ENCODE measurements at regions of chr22 and their contacts with region 1.

Region 1: GRCh38 chr22:29394931-29395581 is 6.7 kb upstream of the AP1B1 start:
- DNase-seq: peak; percentile 41 to 82 (median 64)
- ATAC-seq: peak; percentile 97
- H3K4me3 ChIP-seq: no peak overlapping the region
- H3K4me3 Mint-ChIP-seq: no peak overlapping the region
- H3K27ac ChIP-seq: no peak overlapping the region
- H3K27ac Mint-ChIP-seq: no peak overlapping the region
- H3K4me1 ChIP-seq: no peaks in the 10 kb centered on the region
- H3K4me1 Mint-ChIP-seq: peaks cover 6% of the 10 kb centered on the region
- H3K27me3 ChIP-seq: no peaks in the 10 kb centered on the region
- H3K27me3 Mint-ChIP-seq: peaks cover 2% of the 10 kb centered on the region
- CTCF ChIP-seq: peak; percentile 75

Region 2: DNA sequence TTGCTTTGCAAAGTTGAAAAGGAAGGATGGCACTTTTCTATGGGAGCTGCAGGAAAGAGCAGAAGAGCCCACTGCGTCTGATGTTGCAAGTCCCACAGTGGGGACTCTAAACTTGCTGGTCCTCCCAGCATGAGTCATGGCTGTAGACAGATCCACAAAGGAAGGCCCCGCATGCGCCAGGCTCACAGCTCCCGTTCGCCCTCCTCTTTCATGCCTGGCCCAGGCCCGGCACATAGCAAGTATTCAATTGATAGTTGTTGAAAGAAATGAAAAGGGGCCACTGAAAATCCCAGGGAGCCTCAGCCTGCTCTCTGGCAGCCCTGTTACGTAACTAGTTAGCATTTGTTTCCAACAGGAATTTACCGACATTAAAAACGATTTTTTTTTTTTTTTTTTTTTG is 25.6 kb before region 1 on chr22:
- CTCF ChIA-PET with region 1: no interaction called
- POLR2A ChIA-PET with region 1: no interaction called
- intact Hi-C with region 1: no loop called
- DNase-seq: peak in 1 of 9 experiments; percentile 16
- ATAC-seq: no peak
- H3K4me3 ChIP-seq: no peak overlapping the region
- H3K4me3 Mint-ChIP-seq: no peak overlapping the region
- H3K27ac ChIP-seq: no peak overlapping the region
- H3K27ac Mint-ChIP-seq: no peak overlapping the region
- H3K4me1 ChIP-seq: no peaks in the 10 kb centered on the region
- H3K4me1 Mint-ChIP-seq: peaks cover 14% of the 10 kb centered on the region
- H3K27me3 ChIP-seq: no peaks in the 10 kb centered on the region
- H3K27me3 Mint-ChIP-seq: no peaks in the 10 kb centered on the region
- CTCF ChIP-seq: no peak

Region 3: DNA sequence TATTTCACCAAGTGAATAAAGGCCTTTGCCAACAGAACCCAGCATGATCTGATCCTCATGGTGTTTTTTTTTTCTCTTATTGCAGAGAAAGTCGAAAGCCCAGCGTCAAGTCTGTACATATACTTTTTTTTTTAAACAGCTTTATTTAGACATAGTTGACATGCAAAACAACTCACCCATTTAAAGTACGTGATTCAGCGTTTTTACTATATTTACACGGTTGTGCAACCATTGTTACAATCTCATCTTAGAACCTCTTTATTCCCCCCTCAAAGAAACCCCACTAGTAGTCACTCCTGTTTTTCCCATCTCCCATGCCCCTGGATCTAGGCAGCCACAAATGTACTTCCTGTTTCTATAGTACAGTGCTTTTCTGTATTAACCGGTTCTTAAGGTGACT is 13.9 kb after region 1 on chr22:
- CTCF ChIA-PET with region 1: interaction called, 3 read pairs
- POLR2A ChIA-PET with region 1: no interaction called
- intact Hi-C with region 1: loop called in 1 of 2 experiments (anchors 2 kb)
- DNase-seq: no peak
- ATAC-seq: no peak
- H3K4me3 ChIP-seq: no peak overlapping the region
- H3K4me3 Mint-ChIP-seq: no peak overlapping the region
- H3K27ac ChIP-seq: no peak overlapping the region
- H3K27ac Mint-ChIP-seq: no peak overlapping the region
- H3K4me1 ChIP-seq: no peaks in the 10 kb centered on the region
- H3K4me1 Mint-ChIP-seq: peaks cover 4% of the 10 kb centered on the region
- H3K27me3 ChIP-seq: no peaks in the 10 kb centered on the region
- H3K27me3 Mint-ChIP-seq: no peaks in the 10 kb centered on the region
- CTCF ChIP-seq: no peak

Region 4: GRCh38 chr22:29524440-29525191 is 129.6 kb after region 1 on chr22:
- CTCF ChIA-PET with region 1: interaction called, 6 read pairs
- POLR2A ChIA-PET with region 1: no interaction called
- intact Hi-C with region 1: loop called (anchors 1 kb)
- DNase-seq: peak in 5 of 9 experiments; percentile 10 to 41 (median 21)
- ATAC-seq: no peak
- H3K4me3 ChIP-seq: no peak overlapping the region
- H3K4me3 Mint-ChIP-seq: no peak overlapping the region
- H3K27ac ChIP-seq: no peak overlapping the region
- H3K27ac Mint-ChIP-seq: no peak overlapping the region
- H3K4me1 ChIP-seq: no peaks in the 10 kb centered on the region
- H3K4me1 Mint-ChIP-seq: no peaks in the 10 kb centered on the region
- H3K27me3 ChIP-seq: no peaks in the 10 kb centered on the region
- H3K27me3 Mint-ChIP-seq: no peaks in the 10 kb centered on the region
- CTCF ChIP-seq: no peak

Region 5: DNA sequence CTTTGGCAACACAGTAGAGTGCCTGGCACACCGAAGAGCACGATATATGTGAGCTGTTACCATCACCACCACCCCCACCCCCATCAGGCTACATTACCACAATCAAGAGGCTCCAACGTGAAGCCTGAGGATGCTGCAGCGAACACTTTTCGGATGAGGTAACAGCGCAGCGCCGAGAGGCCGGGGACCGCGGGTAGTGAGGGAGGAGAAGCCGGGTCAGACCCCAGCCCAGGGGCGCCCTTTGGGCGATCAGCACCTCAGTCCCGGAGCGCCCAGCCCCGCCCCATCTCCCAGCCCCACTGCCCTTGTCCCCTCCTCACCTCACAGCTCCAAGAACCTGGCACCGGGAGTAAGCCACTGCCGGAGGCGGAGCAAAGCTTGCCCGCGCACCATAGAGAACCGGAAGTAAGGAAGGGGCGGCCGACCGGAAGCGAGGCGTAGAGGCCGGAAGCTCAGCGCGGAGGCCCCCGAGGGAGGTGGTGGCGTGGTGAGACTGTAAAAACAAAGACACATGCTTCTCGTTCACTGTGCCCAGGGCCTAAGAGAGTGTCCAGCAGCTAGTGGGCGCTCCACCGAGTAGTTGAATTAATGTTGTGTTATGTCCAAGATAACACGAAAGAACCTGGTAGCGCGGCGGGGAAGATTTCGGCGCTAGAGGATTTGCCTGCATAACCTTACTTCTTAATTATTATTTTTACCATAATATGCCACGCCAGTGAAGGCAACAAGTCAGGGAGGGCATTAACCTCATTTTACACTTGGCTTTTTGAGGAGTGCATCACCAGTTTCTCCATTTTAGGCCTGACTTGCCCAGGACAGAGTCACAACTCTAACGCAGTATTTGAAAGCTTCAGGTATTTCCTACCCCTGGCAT is 158.5 kb after region 1 on chr22 and contains the start of gene THOC5:
- CTCF ChIA-PET with region 1: interaction called, 6 read pairs
- POLR2A ChIA-PET with region 1: no interaction called
- intact Hi-C with region 1: loop called in 1 of 2 experiments (anchors 1 kb)
- DNase-seq: peak; percentile 73 to 94 (median 91)
- ATAC-seq: peak; percentile 95
- H3K4me3 ChIP-seq: peak within 1 kb of the TSS; percentile 57 to 94
- H3K4me3 Mint-ChIP-seq: peak within 1 kb of the TSS; percentile 88
- H3K27ac ChIP-seq: peak within 1 kb of the TSS; percentile 61 to 66
- H3K27ac Mint-ChIP-seq: peak within 1 kb of the TSS; percentile 96
- H3K4me1 ChIP-seq: peaks cover 7% of the 10 kb centered on the region
- H3K4me1 Mint-ChIP-seq: peaks cover 27% of the 10 kb centered on the region
- H3K27me3 ChIP-seq: no peaks in the 10 kb centered on the region
- H3K27me3 Mint-ChIP-seq: no peaks in the 10 kb centered on the region
- CTCF ChIP-seq: no peak
- total RNA-seq, gene THOC5: 33.5 to 35.0 TPM

Region 6: GRCh38 chr22:29625090-29625825 is 230.2 kb after region 1 on chr22:
- CTCF ChIA-PET with region 1: interaction called, 6 read pairs
- POLR2A ChIA-PET with region 1: no interaction called
- intact Hi-C with region 1: loop called (anchors 1 to 10 kb)
- DNase-seq: peak in 6 of 9 experiments; percentile 11 to 66 (median 29)
- ATAC-seq: no peak
- H3K4me3 ChIP-seq: no peak overlapping the region
- H3K4me3 Mint-ChIP-seq: no peak overlapping the region
- H3K27ac ChIP-seq: no peak overlapping the region
- H3K27ac Mint-ChIP-seq: no peak overlapping the region
- H3K4me1 ChIP-seq: peaks cover 25% of the 10 kb centered on the region
- H3K4me1 Mint-ChIP-seq: peaks cover 64% of the 10 kb centered on the region
- H3K27me3 ChIP-seq: no peaks in the 10 kb centered on the region
- H3K27me3 Mint-ChIP-seq: no peaks in the 10 kb centered on the region
- CTCF ChIP-seq: peak; percentile 86

Region 7: DNA sequence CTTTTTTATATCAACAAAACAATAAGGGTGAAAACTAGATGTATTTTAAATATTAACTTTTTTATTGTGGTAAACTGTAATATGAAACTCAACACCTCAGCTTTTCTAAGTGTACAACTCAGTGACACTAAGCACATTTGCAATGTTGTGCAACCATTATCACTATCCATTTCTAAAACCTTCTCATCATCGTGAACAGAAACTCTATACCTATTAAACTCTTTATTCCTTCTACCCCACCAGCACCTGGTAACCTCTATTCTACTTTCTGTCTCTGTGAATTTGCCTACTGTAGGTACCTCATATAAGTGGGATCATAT is 694.6 kb after region 1 on chr22:
- CTCF ChIA-PET with region 1: no interaction called
- POLR2A ChIA-PET with region 1: no interaction called
- intact Hi-C with region 1: loop called (anchors 2 kb)
- DNase-seq: no peak
- ATAC-seq: no peak
- H3K4me3 ChIP-seq: no peak overlapping the region
- H3K4me3 Mint-ChIP-seq: no peak overlapping the region
- H3K27ac ChIP-seq: no peak overlapping the region
- H3K27ac Mint-ChIP-seq: no peak overlapping the region
- H3K4me1 ChIP-seq: peaks cover 5% of the 10 kb centered on the region
- H3K4me1 Mint-ChIP-seq: peaks cover 7% of the 10 kb centered on the region
- H3K27me3 ChIP-seq: no peaks in the 10 kb centered on the region
- H3K27me3 Mint-ChIP-seq: peaks cover 15% of the 10 kb centered on the region
- CTCF ChIP-seq: no peak

Measured in CD8-positive, alpha-beta T cell (primary cell).